B cell (primary cell): ENCODE measurements at regions of chr11 and their contacts with region 1.

Region 1: DNA sequence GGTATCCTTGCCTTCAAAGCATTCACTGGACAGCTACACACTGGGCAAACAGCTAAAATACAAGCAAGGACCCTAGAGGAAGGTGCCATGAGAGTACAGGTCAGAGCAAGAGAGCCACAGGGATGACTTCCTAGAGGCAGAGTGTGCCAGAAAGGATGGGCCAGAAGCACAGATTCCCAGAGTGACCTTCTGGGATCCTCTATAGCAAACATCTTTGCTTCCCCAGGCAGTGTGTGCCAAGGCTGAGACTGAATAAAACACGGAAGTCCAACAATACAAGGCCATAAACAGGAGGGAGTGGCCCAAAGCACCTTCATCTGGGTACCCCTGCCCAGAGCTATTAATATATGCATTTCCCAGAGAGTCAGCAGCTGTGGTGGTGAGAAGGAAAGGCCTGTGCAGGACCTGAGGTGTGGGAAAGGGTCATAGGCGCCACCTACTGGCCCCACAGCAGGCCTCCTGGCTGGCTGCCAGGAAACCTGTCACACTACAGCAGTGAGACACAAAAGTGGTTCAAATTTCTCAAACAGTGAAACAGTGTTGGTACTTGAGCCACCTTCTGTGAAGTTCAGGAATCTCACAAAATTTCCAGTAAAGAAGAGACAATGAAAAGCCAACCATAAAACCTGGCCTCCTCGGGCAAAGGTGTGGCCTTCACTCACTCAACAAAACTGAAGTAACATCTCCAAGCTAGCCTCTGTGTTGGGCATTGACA is 20.3 kb downstream of the CLPB start:
- DNase-seq: peak; percentile 81
- ATAC-seq: no peak
- H3K4me3 ChIP-seq: no peak overlapping the region
- H3K4me3 Mint-ChIP-seq: no peak overlapping the region
- H3K27ac ChIP-seq: no peak overlapping the region
- H3K27ac Mint-ChIP-seq: peak overlapping the region; percentile 60
- H3K4me1 ChIP-seq: peaks cover 12 to 27% of the 10 kb centered on the region in 2 donors
- H3K4me1 Mint-ChIP-seq: peaks cover 43% of the 10 kb centered on the region
- H3K27me3 ChIP-seq: no peaks in the 10 kb centered on the region
- H3K27me3 Mint-ChIP-seq: no peaks in the 10 kb centered on the region
- CTCF ChIP-seq: peak; percentile 81

Region 2: GRCh38 chr11:72141066-72141465 is 273.0 kb before region 1 on chr11:
- CTCF ChIA-PET with region 1: interaction called, 14 read pairs
- POLR2A ChIA-PET with region 1: no interaction called
- intact Hi-C with region 1: no loop called
- DNase-seq: no peak
- ATAC-seq: no peak
- H3K4me3 ChIP-seq: no peak overlapping the region
- H3K4me3 Mint-ChIP-seq: no peak overlapping the region
- H3K27ac ChIP-seq: no peak overlapping the region
- H3K27ac Mint-ChIP-seq: no peak overlapping the region
- H3K4me1 ChIP-seq: no peaks in the 10 kb centered on the region
- H3K4me1 Mint-ChIP-seq: no peaks in the 10 kb centered on the region
- H3K27me3 ChIP-seq: peaks cover 0 to 3% (median 0%) of the 10 kb centered on the region in 4 experiments
- H3K27me3 Mint-ChIP-seq: peaks cover 19% of the 10 kb centered on the region
- CTCF ChIP-seq: no peak

Region 3: GRCh38 chr11:72287293-72287692 is 126.8 kb before region 1 on chr11:
- CTCF ChIA-PET with region 1: interaction called, 13 read pairs
- POLR2A ChIA-PET with region 1: no interaction called
- intact Hi-C with region 1: loop called (anchors 1 kb)
- DNase-seq: no peak
- ATAC-seq: no peak
- H3K4me3 ChIP-seq: no peak overlapping the region
- H3K4me3 Mint-ChIP-seq: no peak overlapping the region
- H3K27ac ChIP-seq: no peak overlapping the region
- H3K27ac Mint-ChIP-seq: no peak overlapping the region
- H3K4me1 ChIP-seq: no peaks in the 10 kb centered on the region
- H3K4me1 Mint-ChIP-seq: no peaks in the 10 kb centered on the region
- H3K27me3 ChIP-seq: peaks cover 0 to 6% (median 5%) of the 10 kb centered on the region in 4 experiments
- H3K27me3 Mint-ChIP-seq: peaks cover 14% of the 10 kb centered on the region
- CTCF ChIP-seq: no peak

Region 4: GRCh38 chr11:72352859-72353551 is 61.1 kb before region 1 on chr11:
- CTCF ChIA-PET with region 1: interaction called, 14 read pairs
- POLR2A ChIA-PET with region 1: no interaction called
- intact Hi-C with region 1: loop called (anchors 2 kb)
- DNase-seq: no peak
- ATAC-seq: no peak
- H3K4me3 ChIP-seq: no peak overlapping the region
- H3K4me3 Mint-ChIP-seq: no peak overlapping the region
- H3K27ac ChIP-seq: no peak overlapping the region
- H3K27ac Mint-ChIP-seq: no peak overlapping the region
- H3K4me1 ChIP-seq: no peaks in the 10 kb centered on the region
- H3K4me1 Mint-ChIP-seq: no peaks in the 10 kb centered on the region
- H3K27me3 ChIP-seq: no peaks in the 10 kb centered on the region
- H3K27me3 Mint-ChIP-seq: no peaks in the 10 kb centered on the region
- CTCF ChIP-seq: no peak